ENCODE measurements at regions of chr10 and their contacts with region 1.

Region 1: DNA sequence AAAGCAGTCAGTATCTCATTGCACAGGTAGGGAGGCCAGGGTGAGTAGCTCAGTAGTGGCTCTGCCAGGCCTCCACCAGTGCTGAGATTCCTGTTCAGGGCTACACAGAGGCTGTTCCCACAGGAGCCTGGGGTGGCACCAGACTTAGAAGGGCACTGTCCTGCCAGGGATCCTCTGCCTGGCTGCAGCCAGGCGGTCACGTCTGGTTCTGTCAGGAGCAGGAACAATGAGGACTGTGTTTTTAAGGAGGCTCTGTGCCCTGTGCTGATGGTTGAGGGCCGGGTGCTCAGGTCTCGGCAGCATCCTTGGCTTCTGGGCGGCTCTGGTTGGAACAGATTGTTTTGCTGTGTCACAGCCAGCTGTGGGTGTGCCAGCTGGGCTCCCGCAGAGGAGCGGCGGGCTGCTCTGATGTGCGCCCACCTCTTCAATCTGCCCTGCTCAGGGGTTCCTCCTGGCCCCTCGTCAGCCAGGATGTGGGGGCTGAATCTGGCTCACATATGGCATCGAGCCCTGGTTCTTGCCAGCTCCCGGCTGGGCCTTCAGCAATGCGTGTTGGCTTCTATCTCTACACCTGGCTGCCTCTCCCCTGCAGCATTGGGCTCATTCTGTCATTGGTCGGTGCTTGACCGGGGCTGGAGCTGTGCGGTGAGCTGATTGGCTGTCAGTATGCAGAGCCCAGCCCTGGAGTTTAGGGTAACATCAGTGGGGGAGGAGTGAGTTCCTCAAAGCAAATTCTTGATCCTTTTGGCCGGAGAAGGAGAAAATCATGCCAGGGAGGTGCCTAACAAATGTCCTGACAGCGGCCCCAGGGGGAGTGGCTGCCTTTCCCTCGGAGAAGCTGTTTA is 41.2 kb downstream of the TACR2 start:
- DNase-seq: peak in 9 of 10 donors; percentile 26 to 96 (median 80)

Region 2: DNA sequence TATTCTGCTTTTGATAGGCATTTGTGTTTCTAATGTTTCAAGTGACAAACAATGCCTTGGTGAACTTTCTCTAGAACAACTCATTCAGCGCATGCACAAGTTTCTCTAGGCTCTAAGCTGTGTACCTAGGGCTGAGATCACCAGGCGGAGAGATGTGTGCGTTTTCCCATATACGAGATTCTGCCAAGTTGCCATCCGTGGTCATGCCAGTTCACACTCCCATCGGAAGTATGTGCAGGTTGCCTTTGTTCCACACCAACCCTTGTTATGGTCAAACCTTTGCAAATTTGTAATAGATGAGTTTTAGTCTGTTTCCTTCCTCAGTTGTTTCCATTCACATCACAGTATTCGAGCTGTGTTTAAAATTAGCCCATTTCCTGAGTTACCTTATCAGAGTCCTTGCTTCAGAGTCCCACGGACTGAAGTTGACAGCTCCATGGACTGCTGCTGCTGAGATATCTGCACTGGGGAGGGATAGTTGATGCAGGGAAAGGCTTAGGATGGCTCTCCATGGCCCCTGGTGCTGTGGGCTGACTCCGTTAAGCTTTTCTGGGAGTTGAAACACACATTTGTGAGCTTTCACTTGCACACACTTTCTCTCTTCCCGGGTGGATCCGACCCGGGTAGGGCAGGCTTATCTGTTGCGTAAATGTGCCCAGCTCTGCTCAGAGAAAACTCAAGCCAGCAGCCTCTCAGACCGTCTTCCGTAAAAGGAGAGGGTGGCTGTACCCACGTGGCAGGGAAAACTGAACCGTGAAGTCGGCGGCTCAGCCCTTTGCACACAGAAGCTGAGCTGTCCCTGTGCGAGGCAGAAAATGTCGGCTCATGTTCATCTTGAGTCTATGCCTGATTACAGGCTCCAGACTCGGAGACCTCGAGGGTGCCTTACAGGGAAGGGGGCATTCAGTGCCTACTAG is 47.8 kb before region 1 on chr10:
- intact Hi-C with region 1: loop called (anchors 5 kb)
- DNase-seq: peak; percentile 41 to 96 (median 74)

Region 3: GRCh38 chr10:69612760-69613159 is 237.2 kb after region 1 on chr10:
- intact Hi-C with region 1: no loop called
- DNase-seq: no peak